Common myeloid progenitor, CD34-positive (primary cell): ENCODE measurements at regions of chr11 and their contacts with region 1.

Region 1: DNA sequence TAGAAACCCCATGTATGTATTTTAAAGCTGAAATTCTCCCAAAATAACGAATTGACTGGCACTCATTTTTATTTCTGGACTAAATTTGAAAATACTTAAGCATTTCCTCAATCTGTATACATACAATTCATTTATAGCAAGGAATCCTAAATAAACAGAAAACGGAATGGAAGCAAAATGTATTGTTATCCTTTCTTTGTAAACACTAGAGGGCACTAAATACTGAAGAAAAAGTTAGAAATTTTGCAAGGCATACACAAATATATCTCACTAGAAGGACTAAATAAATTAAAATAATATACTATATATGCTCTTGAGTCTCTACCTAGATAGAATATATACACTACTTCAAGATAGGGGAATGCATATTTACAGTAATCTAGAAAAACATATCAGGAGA is 23.1 kb upstream of the ANO5 start:
- DNase-seq: peak in 2 of 3 donors; percentile 19 to 28
- H3K4me3 ChIP-seq: no peak overlapping the region
- H3K27ac ChIP-seq: no peak overlapping the region
- H3K4me1 ChIP-seq: no peaks in the 10 kb centered on the region
- H3K27me3 ChIP-seq: no peaks in the 10 kb centered on the region

Region 2: GRCh38 chr11:21798216-21798615 is 371.6 kb before region 1 on chr11:
- CTCF ChIA-PET with region 1: no interaction called
- POLR2A ChIA-PET with region 1: no interaction called
- DNase-seq: no peak
- H3K4me3 ChIP-seq: no peak overlapping the region
- H3K27ac ChIP-seq: no peak overlapping the region
- H3K4me1 ChIP-seq: no peaks in the 10 kb centered on the region
- H3K27me3 ChIP-seq: no peaks in the 10 kb centered on the region

Region 3: DNA sequence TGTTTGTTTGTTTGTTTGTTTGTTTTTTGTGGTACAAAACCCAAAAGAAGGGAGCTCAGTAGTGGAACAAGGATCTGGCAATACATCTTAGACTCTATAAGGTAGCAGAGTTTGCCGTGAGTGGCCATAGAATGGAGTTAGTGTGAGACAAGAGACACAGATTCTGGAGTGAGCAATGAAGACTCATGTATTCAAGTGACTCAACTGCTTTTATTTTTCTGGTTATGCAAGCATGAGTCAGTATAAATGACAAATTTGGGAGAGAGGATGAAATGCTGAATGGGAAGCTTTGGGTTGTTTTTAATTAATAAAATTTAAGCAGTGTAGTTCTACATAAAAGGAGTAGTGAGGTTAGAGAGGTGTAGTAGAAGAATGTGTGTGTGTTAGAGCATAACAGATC is 120.6 kb before region 1 on chr11:
- CTCF ChIA-PET with region 1: no interaction called
- POLR2A ChIA-PET with region 1: no interaction called
- DNase-seq: no peak
- H3K4me3 ChIP-seq: no peak overlapping the region
- H3K27ac ChIP-seq: no peak overlapping the region
- H3K4me1 ChIP-seq: no peaks in the 10 kb centered on the region
- H3K27me3 ChIP-seq: no peaks in the 10 kb centered on the region

Region 4: DNA sequence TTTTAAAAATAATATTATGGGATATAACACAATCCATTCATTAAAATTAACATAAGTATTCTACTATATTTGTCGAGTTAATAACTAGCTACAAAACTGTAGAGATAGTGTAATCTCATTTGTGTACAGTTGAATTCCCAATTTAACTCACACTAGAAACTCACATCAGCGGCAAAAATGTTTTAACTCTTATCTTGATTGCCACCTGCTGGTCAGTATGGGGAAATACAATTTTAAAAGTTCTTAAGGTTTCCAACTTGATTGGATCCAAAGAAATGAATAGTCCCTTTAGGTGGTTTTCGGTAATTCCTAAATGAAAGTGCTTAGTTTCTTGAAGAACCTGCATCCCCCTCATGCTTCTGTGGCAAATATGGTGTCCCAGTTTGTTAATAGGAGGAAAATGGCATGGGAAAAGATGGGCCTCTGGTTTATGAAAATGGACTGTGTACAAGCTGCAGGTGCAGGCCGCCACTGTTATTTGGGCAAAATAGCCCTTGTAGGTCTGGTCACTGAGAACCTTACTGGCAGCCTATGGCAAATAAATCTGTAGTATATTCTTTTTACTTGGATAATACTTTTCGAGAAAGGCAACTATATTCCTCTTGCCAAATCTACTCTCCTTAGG is 134.6 kb after region 1 on chr11:
- CTCF ChIA-PET with region 1: interaction called, 26 read pairs
- POLR2A ChIA-PET with region 1: no interaction called
- DNase-seq: peak; percentile 39 to 70 (median 67)
- H3K4me3 ChIP-seq: no peak overlapping the region
- H3K27ac ChIP-seq: no peak overlapping the region
- H3K4me1 ChIP-seq: no peaks in the 10 kb centered on the region
- H3K27me3 ChIP-seq: peaks cover 0 to 18% (median 2%) of the 10 kb centered on the region in 5 experiments